MCF 10A (cell line): ENCODE measurements at regions of chr5 and their contacts with region 1.

Region 1: DNA sequence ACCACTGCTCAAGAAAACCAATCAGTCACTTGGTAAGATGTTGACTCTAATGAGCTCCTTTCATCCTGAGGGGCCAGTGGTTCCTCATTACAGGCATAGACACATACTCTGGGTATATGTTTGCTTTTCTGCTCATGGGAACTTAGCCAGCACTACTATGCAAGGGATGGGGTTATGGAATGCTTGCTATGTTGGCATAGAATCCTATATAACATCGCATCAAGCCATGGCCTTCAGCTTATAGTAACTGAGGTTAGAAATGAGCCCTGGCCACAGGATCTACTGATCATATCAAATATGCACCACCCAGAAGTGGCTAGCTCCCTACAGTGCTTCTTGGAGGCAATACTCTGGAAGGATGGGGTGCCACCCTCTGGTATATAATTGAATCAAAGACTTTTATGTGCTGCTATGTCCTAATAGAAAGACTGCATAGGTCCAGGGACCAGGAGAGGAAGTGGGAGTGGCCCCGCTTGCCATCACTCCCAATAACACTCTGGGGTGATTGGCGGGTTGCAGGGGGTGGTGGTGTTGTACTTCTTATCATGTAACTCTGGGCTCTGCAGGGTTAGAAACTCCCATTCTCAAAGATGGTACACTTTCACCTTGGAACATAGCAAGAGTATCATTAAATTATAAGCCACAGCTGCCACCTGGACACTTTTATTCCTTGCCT is 70.3 kb downstream of the ZNF366 start:
- DNase-seq: peak; percentile 38
- H3K4me3 Mint-ChIP-seq: no peak overlapping the region
- H3K27ac Mint-ChIP-seq: peak overlapping the region; percentile 93
- H3K4me1 Mint-ChIP-seq: peaks cover 67% of the 10 kb centered on the region
- H3K27me3 Mint-ChIP-seq: no peaks in the 10 kb centered on the region
- CTCF ChIP-seq: no peak

Region 2: DNA sequence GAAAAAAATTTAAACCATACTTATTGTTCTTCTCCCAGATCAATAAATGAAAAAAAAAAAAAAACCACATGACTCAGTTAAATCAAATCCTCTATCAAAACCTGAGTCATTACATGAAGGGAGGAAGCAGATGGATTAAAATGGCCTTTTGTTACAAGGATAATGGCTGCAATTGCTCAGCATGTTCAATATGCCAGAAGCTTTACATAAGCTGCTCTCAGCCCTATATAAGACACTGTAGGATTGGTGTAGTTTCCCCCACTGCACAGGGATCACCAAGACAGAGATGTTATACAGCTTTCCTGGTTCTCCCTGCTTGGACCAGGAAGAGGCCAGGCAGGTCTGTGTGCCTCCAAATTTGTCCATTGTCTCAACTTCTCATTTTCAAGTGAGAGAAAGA is 431.3 kb before region 1 on chr5:
- CTCF ChIA-PET with region 1: no interaction called
- POLR2A ChIA-PET with region 1: no interaction called
- intact Hi-C with region 1: no loop called
- DNase-seq: no peak
- H3K4me3 Mint-ChIP-seq: no peak overlapping the region
- H3K27ac Mint-ChIP-seq: no peak overlapping the region
- H3K4me1 Mint-ChIP-seq: no peaks in the 10 kb centered on the region
- H3K27me3 Mint-ChIP-seq: peaks cover 32% of the 10 kb centered on the region
- CTCF ChIP-seq: no peak

Region 3: GRCh38 chr5:72402959-72403628 is 33.8 kb before region 1 on chr5:
- CTCF ChIA-PET with region 1: interaction called, 3 read pairs
- POLR2A ChIA-PET with region 1: interaction called, 32 read pairs
- intact Hi-C with region 1: no loop called
- DNase-seq: no peak
- H3K4me3 Mint-ChIP-seq: no peak overlapping the region
- H3K27ac Mint-ChIP-seq: peak overlapping the region; percentile 82
- H3K4me1 Mint-ChIP-seq: peaks cover 13% of the 10 kb centered on the region
- H3K27me3 Mint-ChIP-seq: no peaks in the 10 kb centered on the region
- CTCF ChIP-seq: peak; percentile 24

Region 4: GRCh38 chr5:72451741-72452505 is 15.0 kb after region 1 on chr5:
- CTCF ChIA-PET with region 1: interaction called, 3 read pairs
- POLR2A ChIA-PET with region 1: interaction called, 16 read pairs
- intact Hi-C with region 1: no loop called
- DNase-seq: peak; percentile 86
- H3K4me3 Mint-ChIP-seq: no peak overlapping the region
- H3K27ac Mint-ChIP-seq: peak overlapping the region; percentile 92
- H3K4me1 Mint-ChIP-seq: peaks cover 27% of the 10 kb centered on the region
- H3K27me3 Mint-ChIP-seq: no peaks in the 10 kb centered on the region
- CTCF ChIP-seq: no peak

Region 5: DNA sequence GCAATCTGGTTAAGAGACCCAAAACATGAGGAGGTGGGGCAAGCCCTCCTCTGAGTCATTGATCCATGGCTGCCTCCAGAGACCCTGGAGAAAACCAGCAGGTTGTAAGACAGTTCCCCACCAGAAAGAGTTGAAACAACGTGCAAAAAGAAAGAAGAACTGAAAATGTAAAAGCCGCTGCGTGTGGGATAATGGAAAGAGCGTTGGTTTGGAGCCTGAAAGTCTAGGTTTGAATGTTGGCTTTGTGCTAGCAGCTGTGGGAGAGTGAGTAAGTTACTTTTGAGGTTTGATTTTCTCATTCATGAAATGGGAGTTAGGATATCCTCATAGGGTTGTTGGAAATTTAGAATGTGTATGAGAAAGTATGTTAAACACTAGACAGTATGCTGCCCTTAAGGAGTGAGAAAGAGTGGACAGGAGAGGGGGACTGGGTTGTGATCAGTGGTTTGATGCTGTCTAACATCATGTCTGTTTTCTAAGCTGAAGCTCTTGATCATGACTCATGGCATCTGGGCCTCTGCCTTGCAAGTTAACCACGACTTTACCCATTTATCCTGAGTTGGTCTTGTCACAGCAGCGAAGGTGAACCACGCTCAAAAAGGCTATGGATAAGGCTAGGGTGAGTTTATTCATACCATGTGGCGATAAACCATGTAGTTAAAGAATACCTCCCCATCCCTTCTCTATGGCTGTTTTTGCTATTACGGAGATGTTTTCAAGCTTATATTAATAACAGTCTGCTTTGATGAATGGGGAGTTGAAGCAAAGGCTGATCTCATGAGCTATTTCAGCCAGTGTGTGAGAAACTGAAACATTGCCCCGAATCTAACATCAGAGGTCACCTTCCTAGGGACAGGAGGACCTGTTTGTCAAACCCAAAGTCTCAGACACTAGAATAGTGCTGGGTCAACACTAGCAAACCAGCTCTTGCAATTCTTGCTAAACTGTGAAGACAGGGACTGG is 28.9 kb after region 1 on chr5:
- CTCF ChIA-PET with region 1: interaction called, 3 read pairs
- POLR2A ChIA-PET with region 1: interaction called, 19 read pairs
- intact Hi-C with region 1: no loop called
- DNase-seq: no peak
- H3K4me3 Mint-ChIP-seq: no peak overlapping the region
- H3K27ac Mint-ChIP-seq: peak overlapping the region; percentile 3
- H3K4me1 Mint-ChIP-seq: peaks cover 46% of the 10 kb centered on the region
- H3K27me3 Mint-ChIP-seq: no peaks in the 10 kb centered on the region
- CTCF ChIP-seq: no peak

Region 6: DNA sequence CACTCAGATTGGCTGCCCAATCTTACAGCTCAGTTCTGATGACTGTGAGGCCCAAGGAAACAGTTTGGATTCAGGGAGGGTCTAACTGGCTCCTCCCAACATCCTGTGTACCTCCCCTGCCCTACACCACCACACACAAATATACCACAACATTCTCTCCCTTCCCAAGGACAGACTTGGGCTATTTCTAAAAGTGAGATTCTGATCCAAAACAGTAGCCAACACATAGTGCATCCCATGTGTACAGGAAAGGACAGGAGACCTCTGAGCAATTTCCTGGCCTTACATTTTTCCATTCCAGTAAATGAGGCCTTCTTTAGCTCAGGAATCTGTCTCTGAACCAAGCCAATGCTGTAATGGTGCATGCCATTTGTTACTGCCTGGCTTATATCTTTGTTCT is 49.4 kb after region 1 on chr5:
- CTCF ChIA-PET with region 1: interaction called, 3 read pairs
- POLR2A ChIA-PET with region 1: interaction called, 13 read pairs
- intact Hi-C with region 1: no loop called
- DNase-seq: no peak
- H3K4me3 Mint-ChIP-seq: no peak overlapping the region
- H3K27ac Mint-ChIP-seq: peak overlapping the region; percentile 96
- H3K4me1 Mint-ChIP-seq: peaks cover 27% of the 10 kb centered on the region
- H3K27me3 Mint-ChIP-seq: no peaks in the 10 kb centered on the region
- CTCF ChIP-seq: no peak

Region 7: DNA sequence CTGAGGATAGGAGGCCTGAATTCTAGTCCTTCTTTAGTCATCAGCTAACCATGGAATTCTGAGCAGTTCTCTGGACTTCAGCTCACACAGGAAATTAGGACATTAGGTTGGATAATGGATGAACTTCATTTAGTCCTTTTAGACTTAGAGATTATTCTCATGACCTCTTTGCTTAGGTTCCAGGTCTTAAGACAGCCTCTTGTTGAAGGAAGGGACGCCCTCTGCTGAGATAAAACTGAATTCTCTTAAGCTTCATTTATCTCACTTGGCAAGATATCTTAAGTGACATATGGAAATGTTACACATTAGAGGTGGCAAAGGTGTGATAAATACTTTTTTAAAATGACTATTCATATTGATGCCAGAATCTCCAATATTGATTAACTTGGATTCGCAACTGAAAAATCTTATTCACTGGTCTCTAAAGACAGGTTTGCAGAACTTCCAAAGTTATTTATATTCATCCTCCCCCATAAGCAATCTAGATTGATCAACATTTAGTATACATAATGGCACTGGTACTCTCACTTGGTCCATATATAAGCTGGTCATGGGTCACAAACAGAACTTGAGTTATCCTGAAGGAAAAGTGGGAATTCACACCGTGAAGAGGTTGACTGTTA is 87.1 kb after region 1 on chr5:
- CTCF ChIA-PET with region 1: interaction called, 13 read pairs
- POLR2A ChIA-PET with region 1: interaction called, 5 read pairs
- intact Hi-C with region 1: no loop called
- DNase-seq: peak; percentile 78
- H3K4me3 Mint-ChIP-seq: no peak overlapping the region
- H3K27ac Mint-ChIP-seq: no peak overlapping the region
- H3K4me1 Mint-ChIP-seq: peaks cover 12% of the 10 kb centered on the region
- H3K27me3 Mint-ChIP-seq: no peaks in the 10 kb centered on the region
- CTCF ChIP-seq: peak; percentile 67

Region 8: DNA sequence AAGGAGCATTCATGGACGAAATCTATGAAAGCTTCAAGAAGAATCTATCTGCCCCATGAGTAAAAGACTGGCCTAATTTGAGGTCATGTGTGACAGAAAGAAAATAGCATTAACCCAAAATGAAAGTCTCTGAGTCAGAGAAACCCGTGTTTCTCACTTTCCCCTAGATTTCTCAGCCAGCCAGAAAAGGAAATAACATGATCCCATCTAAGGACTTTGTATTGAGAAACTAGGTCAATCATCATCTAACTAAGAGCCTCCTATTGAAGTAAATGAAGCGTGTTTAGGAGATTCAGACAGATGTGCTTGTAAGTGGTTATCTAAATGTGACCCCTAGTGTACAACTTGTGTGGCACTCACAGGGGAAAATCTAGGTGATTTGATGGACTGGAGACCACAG is 147.5 kb after region 1 on chr5:
- CTCF ChIA-PET with region 1: no interaction called
- POLR2A ChIA-PET with region 1: no interaction called
- intact Hi-C with region 1: no loop called
- DNase-seq: no peak
- H3K4me3 Mint-ChIP-seq: no peak overlapping the region
- H3K27ac Mint-ChIP-seq: no peak overlapping the region
- H3K4me1 Mint-ChIP-seq: peaks cover 5% of the 10 kb centered on the region
- H3K27me3 Mint-ChIP-seq: no peaks in the 10 kb centered on the region
- CTCF ChIP-seq: no peak